CD4-positive, alpha-beta memory T cell (primary cell): ENCODE measurements at regions of chr20 and their contacts with region 1.

Region 1: GRCh38 chr20:1622450-1622849 is 2.6 kb upstream of the SIRPB1 start:
- DNase-seq: peak in 4 of 5 donors; percentile 27 to 45 (median 31)
- H3K4me3 ChIP-seq: no peak overlapping the region
- H3K4me3 Mint-ChIP-seq: peak overlapping the region in 7 of 8 donors; percentile 17 to 76 (median 62)
- H3K27ac ChIP-seq: no peak overlapping the region
- H3K27ac Mint-ChIP-seq: peak overlapping the region; percentile 11 to 90 (median 86)
- H3K4me1 ChIP-seq: peaks cover 71% of the 10 kb centered on the region
- H3K4me1 Mint-ChIP-seq: peaks cover 55 to 91% (median 67%) of the 10 kb centered on the region in 4 donors
- H3K27me3 ChIP-seq: no peaks in the 10 kb centered on the region
- H3K27me3 Mint-ChIP-seq: no peaks in the 10 kb centered on the region

Region 2: DNA sequence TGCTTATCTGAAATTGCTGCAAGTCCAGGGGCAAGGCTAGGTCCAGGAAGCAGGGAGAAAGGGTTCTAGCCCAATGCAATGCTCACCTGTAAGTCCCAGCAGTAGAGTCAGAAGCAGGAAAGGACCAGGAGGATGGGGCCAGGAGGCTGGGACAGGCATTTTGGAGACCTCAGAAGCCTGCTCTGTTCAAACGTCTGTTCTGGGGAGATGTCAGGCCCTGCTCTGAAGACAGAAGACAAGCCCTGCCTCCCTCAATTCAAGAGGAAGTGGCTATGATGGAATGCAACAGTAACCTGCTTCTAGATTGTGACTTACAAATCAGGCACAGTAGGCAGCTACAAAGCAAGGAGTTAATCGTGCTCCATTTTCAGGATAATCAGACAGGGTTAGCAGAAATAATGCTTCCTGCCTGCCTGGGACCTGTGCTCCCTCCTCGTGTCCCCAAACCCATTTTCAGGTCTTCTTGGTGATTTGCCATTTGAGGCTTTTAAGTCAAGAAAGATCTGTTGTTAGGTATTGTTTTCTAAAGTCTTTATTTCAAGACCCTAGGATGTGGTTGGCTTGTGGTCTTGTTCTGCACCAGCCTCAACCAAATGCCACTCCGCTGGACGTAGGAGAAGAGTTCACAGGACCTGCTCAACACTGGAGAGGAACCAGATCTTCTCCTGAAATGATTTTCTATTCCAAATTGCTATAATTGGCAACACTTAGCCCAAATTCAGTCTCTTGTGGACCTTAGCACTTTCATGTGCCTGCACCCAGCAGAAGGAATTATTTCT is 35.3 kb after region 1 on chr20 and contains the start of gene SIRPG:
- CTCF ChIA-PET with region 1: no interaction called
- POLR2A ChIA-PET with region 1: interaction called, 3 read pairs
- intact Hi-C with region 1: loop called (anchors 2 kb)
- DNase-seq: peak in 3 of 5 donors; percentile 37 to 45 (median 39)
- H3K4me3 ChIP-seq: peak within 1 kb of the TSS; percentile 60 to 79
- H3K4me3 Mint-ChIP-seq: peak within 1 kb of the TSS; percentile 87 to 97 (median 92)
- H3K27ac ChIP-seq: peak within 1 kb of the TSS; percentile 78
- H3K27ac Mint-ChIP-seq: peak within 1 kb of the TSS; percentile 89 to 96 (median 95)
- H3K4me1 ChIP-seq: peaks cover 96% of the 10 kb centered on the region
- H3K4me1 Mint-ChIP-seq: peaks cover 71 to 93% (median 85%) of the 10 kb centered on the region in 4 donors
- H3K27me3 ChIP-seq: no peaks in the 10 kb centered on the region
- H3K27me3 Mint-ChIP-seq: no peaks in the 10 kb centered on the region
- total RNA-seq, gene SIRPG: 32.4 to 34.9 TPM